ENCODE measurements at regions of chr1 and their contacts with region 1.

Region 1: GRCh38 chr1:193406901-193407300 is 220.5 kb upstream of the B3GALT2 start:
- DNase-seq: no peak
- ATAC-seq: peak; percentile 79
- H3K4me3 ChIP-seq: no peak overlapping the region
- H3K27ac ChIP-seq: no peak overlapping the region
- H3K4me1 ChIP-seq: no peaks in the 10 kb centered on the region
- H3K27me3 ChIP-seq: no peaks in the 10 kb centered on the region
- CTCF ChIP-seq: peak; percentile 55 to 69 (median 66); a peak in 5 of 6 replicates
- EP300 ChIP-seq: no peak
- POLR2A ChIP-seq: no peak
- RAD21 ChIP-seq: peak; percentile 73

Region 2: GRCh38 chr1:193183019-193183627 is 223.8 kb before region 1 on chr1:
- CTCF ChIA-PET with region 1: no interaction called
- POLR2A ChIA-PET with region 1: no interaction called
- RAD21 ChIA-PET with region 1: interaction called, 3 read pairs
- SMC1A ChIA-PET with region 1: no interaction called
- in situ Hi-C with region 1: no loop called
- intact Hi-C with region 1: loop called (anchors 10 kb)
- DNase-seq: no peak
- ATAC-seq: peak; percentile 79
- H3K4me3 ChIP-seq: no peak overlapping the region
- H3K27ac ChIP-seq: no peak overlapping the region
- H3K4me1 ChIP-seq: no peaks in the 10 kb centered on the region
- H3K27me3 ChIP-seq: no peaks in the 10 kb centered on the region
- CTCF ChIP-seq: peak; percentile 61 to 77 (median 65)
- EP300 ChIP-seq: no peak
- POLR2A ChIP-seq: no peak
- RAD21 ChIP-seq: peak; percentile 84

Region 3: GRCh38 chr1:193241132-193241827 is 165.6 kb before region 1 on chr1:
- CTCF ChIA-PET with region 1: no interaction called
- POLR2A ChIA-PET with region 1: no interaction called
- RAD21 ChIA-PET with region 1: no interaction called
- SMC1A ChIA-PET with region 1: no interaction called
- in situ Hi-C with region 1: no loop called
- intact Hi-C with region 1: no loop called
- DNase-seq: no peak
- ATAC-seq: peak; percentile 77
- H3K4me3 ChIP-seq: no peak overlapping the region
- H3K27ac ChIP-seq: no peak overlapping the region
- H3K4me1 ChIP-seq: no peaks in the 10 kb centered on the region
- H3K27me3 ChIP-seq: no peaks in the 10 kb centered on the region
- CTCF ChIP-seq: no peak
- EP300 ChIP-seq: no peak
- POLR2A ChIP-seq: no peak
- RAD21 ChIP-seq: no peak

Region 4: DNA sequence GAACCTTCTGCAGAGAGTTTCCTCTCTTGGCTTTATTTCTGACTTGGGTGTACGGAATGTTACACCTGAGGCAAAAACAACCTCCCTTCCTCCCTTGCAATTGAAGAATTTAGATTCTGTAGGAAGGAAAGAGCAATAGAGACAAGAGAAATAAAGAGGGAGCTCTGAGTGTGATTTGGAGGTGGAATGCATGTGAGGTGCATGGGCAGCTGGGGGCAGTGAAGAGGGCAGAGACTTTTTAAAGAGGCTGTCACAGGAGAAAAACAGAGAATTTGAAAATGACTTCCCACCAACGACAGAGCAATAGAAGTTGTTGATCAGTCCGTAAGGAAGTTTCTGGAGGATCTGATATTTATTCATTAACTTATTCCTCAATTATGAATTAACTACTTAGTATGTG is 48.5 kb before region 1 on chr1:
- CTCF ChIA-PET with region 1: no interaction called
- POLR2A ChIA-PET with region 1: no interaction called
- RAD21 ChIA-PET with region 1: no interaction called
- SMC1A ChIA-PET with region 1: no interaction called
- in situ Hi-C with region 1: no loop called
- intact Hi-C with region 1: no loop called
- DNase-seq: no peak
- ATAC-seq: no peak
- H3K4me3 ChIP-seq: no peak overlapping the region
- H3K27ac ChIP-seq: no peak overlapping the region
- H3K4me1 ChIP-seq: no peaks in the 10 kb centered on the region
- H3K27me3 ChIP-seq: no peaks in the 10 kb centered on the region; a peak in 1 of 4 replicates
- CTCF ChIP-seq: no peak
- EP300 ChIP-seq: no peak
- POLR2A ChIP-seq: no peak
- RAD21 ChIP-seq: no peak

Region 5: DNA sequence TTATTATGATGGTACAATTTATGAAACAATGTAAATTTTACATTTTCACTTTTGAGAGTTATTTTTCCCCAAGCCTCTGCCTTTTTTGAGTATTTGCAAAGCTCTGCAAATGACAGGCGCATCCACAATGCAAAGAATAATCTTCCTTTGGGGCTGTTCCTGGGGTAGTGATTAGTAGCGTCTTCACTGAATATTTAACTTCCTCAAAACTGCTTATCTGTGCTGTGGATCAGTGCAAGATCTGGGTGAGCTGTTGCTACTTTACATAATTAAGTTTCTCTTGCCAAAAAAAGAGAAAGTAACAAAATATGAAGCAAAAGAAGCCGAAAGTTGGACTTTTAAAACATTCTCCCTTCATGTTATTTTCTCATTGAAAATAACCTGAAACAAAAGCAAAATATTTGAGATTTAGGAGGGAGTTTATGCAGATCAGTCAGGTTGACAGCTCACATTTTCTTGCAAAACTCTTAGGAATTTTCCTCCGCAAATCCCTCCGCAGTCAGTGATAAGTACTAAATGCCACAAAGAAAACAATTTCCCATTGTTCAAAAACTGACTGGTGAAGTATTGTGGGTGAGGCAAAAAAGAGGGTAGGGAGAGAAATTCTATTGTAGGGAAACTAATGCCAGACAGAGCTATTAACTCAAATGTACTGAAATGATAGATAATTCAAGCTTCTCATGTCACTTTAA is 55.9 kb after region 1 on chr1:
- CTCF ChIA-PET with region 1: no interaction called
- POLR2A ChIA-PET with region 1: no interaction called
- RAD21 ChIA-PET with region 1: no interaction called
- SMC1A ChIA-PET with region 1: no interaction called
- in situ Hi-C with region 1: no loop called
- intact Hi-C with region 1: no loop called
- DNase-seq: no peak
- ATAC-seq: no peak
- H3K4me3 ChIP-seq: no peak overlapping the region
- H3K27ac ChIP-seq: no peak overlapping the region
- H3K4me1 ChIP-seq: no peaks in the 10 kb centered on the region
- H3K27me3 ChIP-seq: no peaks in the 10 kb centered on the region
- CTCF ChIP-seq: no peak
- EP300 ChIP-seq: no peak
- POLR2A ChIP-seq: no peak
- RAD21 ChIP-seq: no peak

Region 6: DNA sequence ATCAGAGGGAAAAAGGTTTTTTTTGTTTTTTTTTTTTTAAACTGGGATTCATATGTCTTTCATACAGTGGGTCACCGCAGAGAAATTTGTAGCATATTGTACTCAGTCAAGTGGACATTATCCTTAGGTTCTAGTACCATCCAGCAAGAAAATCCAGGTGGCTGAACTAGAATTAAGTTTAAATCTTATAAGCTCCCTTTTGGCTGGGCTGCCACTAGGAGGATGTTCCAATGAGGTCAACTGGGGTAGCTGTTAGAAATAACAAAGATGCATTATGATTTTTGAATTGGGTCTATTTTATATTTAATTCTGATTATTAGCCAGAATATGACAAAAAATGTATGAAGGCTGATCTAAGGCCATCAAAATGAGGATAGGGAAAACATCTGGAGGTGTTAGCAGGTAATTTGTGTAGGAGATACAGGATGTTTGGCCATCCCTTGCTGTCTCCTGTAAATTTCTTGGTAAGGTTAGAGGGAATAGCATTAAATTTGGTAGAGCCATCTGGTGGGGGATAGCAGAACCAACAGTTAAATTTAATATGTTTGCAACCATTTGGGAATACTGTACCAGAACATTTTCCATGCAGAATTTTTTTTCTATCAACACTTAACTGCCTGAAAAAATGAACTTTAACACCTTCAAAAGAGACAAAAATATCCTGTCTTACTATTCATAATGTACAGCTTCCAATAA is 348.0 kb after region 1 on chr1:
- CTCF ChIA-PET with region 1: interaction called, 4 read pairs
- POLR2A ChIA-PET with region 1: no interaction called
- RAD21 ChIA-PET with region 1: no interaction called
- SMC1A ChIA-PET with region 1: no interaction called
- in situ Hi-C with region 1: no loop called
- intact Hi-C with region 1: loop called (anchors 10 kb)
- DNase-seq: no peak
- ATAC-seq: no peak
- H3K4me3 ChIP-seq: no peak overlapping the region
- H3K27ac ChIP-seq: no peak overlapping the region
- H3K4me1 ChIP-seq: no peaks in the 10 kb centered on the region
- H3K27me3 ChIP-seq: no peaks in the 10 kb centered on the region
- CTCF ChIP-seq: no peak
- EP300 ChIP-seq: no peak
- POLR2A ChIP-seq: no peak
- RAD21 ChIP-seq: 0 out of 2 replicates have a peak, but pooled peaks have one; percentile 15

Region 7: DNA sequence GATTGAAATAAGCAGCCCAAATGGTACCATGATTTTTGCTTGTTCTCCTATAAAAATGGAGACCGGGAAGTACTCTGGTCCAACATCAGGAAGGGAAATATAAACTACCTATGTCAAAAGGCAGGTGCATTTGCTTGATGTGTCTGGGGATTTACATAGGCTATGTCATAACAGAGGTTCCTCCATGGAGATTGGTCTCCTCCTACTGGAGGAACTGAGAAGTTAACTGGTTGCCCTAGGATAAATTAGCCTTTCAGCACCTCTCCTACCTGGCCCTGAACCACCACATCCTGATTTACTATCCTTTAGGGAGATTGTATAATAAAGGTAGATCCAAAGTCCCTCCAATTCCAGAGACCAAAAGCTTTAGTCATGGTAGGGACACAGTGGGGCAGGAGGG is 888.8 kb after region 1 on chr1:
- CTCF ChIA-PET with region 1: no interaction called
- POLR2A ChIA-PET with region 1: no interaction called
- RAD21 ChIA-PET with region 1: no interaction called
- SMC1A ChIA-PET with region 1: no interaction called
- in situ Hi-C with region 1: no loop called
- intact Hi-C with region 1: loop called (anchors 1 kb)
- DNase-seq: no peak
- ATAC-seq: peak; percentile 94
- H3K4me3 ChIP-seq: no peak overlapping the region
- H3K27ac ChIP-seq: no peak overlapping the region
- H3K4me1 ChIP-seq: no peaks in the 10 kb centered on the region
- H3K27me3 ChIP-seq: no peaks in the 10 kb centered on the region
- CTCF ChIP-seq: peak; percentile 66 to 75 (median 70)
- EP300 ChIP-seq: no peak
- POLR2A ChIP-seq: no peak
- RAD21 ChIP-seq: peak; percentile 88